ENCODE measurements at regions of chr2 and their contacts with region 1.

Region 1: DNA sequence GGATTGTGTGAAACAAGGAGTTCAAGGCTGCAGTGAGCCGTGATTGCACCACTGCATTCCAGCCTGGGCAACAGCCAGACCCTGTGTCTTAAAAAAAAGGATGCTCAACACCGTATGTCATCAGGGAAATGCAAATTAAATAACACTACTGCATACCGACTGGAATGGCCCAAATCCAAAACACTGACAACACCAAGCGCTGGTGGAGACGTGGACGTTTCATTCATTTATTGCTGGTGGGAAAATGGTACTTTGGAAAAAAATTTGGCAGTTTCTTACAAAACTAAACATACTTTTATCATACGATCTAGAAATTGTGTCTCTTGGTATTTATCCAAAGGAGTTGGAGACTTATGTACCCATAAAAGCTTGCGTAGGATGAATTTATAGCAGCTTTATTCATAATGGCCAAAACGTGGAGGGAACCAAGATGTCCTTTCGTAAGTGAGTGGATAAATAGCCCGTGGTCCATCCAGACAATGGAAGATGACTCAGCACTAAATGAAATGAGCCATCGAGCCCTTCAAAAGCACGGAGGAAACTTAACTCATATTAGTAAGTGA is 24.2 kb downstream of the NEU4 start:
- DNase-seq: peak; percentile 55
- ATAC-seq: peak; percentile 83
- H3K4me3 ChIP-seq: no peak overlapping the region
- H3K27ac ChIP-seq: no peak overlapping the region
- H3K4me1 ChIP-seq: no peaks in the 10 kb centered on the region
- H3K27me3 ChIP-seq: peaks cover 10% of the 10 kb centered on the region
- CTCF ChIP-seq: no peak
- POLR2A ChIP-seq: no peak
- RAD21 ChIP-seq: no peak

Region 2: DNA sequence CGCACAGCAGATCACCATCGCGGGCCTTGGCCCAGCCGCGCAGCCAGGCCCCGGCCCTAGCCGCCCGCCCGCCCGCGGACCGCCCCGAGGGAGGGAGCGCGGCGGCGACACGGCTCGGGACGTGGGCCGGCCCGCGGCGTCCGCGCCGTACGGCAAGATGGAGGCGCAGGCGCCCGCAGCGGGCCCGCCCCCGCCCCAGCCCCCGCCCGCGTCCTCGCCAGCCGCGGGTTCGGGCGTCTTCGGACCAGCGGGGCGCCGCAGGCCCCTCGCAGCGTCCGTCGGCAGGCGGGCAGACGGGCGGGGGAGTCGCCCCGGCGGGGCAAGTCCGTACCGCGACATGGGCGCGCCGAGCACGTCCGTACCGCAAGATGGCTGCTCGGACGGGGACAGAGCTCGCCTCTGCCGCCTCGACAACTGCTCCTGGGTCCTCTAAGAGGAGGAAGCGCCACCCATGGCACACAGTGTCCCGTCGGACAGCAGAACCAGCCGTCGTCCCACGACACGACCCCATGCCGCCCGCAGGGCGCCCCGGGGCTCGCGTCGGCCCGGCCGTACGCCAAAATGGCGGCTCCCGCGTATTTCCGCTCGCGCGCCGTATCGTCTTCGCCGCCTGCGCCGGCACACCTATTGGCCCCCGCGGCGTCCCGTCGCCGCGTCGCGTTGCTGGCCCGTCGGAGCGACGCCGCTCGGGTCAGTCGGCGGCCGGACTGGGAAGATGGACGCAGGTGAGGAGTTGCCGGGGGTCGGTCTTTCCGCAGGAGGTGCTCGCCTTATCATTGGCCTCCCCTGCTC is 196.0 kb before region 1 on chr2 and contains the starts of genes ATG4B and THAP4:
- CTCF ChIA-PET with region 1: no interaction called
- POLR2A ChIA-PET with region 1: no interaction called
- dilution Hi-C with region 1: no loop called
- in situ Hi-C with region 1: no loop called
- intact Hi-C with region 1: no loop called
- DNase-seq: peak; percentile 82
- ATAC-seq: peak; percentile 87
- H3K4me3 ChIP-seq: peak within 1 kb of the TSS; percentile 100
- H3K27ac ChIP-seq: peak within 1 kb of the TSS; percentile 100
- H3K4me1 ChIP-seq: peaks cover 3% of the 10 kb centered on the region; the same call in 1 of the 2 replicates
- H3K27me3 ChIP-seq: no peaks in the 10 kb centered on the region
- CTCF ChIP-seq: no peak
- POLR2A ChIP-seq: peak; percentile 82
- RAD21 ChIP-seq: no peak
- total RNA-seq, gene ATG4B: 102 and 146 TPM in 2 replicates
- total RNA-seq, gene THAP4: 33.9 and 42.2 TPM in 2 replicates

Region 3: GRCh38 chr2:241762933-241763369 is 70.2 kb before region 1 on chr2:
- CTCF ChIA-PET with region 1: no interaction called
- POLR2A ChIA-PET with region 1: no interaction called
- dilution Hi-C with region 1: no loop called
- in situ Hi-C with region 1: no loop called
- intact Hi-C with region 1: no loop called
- DNase-seq: no peak
- ATAC-seq: no peak; the same call in 1 of the 2 replicates
- H3K4me3 ChIP-seq: no peak overlapping the region
- H3K27ac ChIP-seq: no peak overlapping the region
- H3K4me1 ChIP-seq: no peaks in the 10 kb centered on the region
- H3K27me3 ChIP-seq: no peaks in the 10 kb centered on the region
- CTCF ChIP-seq: no peak
- POLR2A ChIP-seq: no peak
- RAD21 ChIP-seq: no peak

Region 4: GRCh38 chr2:241794250-241794823 is 38.8 kb before region 1 on chr2:
- CTCF ChIA-PET with region 1: no interaction called
- POLR2A ChIA-PET with region 1: no interaction called
- dilution Hi-C with region 1: no loop called
- in situ Hi-C with region 1: no loop called
- intact Hi-C with region 1: loop called (anchors 5 kb)
- DNase-seq: no peak
- ATAC-seq: no peak
- H3K4me3 ChIP-seq: no peak overlapping the region
- H3K27ac ChIP-seq: no peak overlapping the region
- H3K4me1 ChIP-seq: no peaks in the 10 kb centered on the region
- H3K27me3 ChIP-seq: peaks cover 12% of the 10 kb centered on the region; the same call in 1 of the 2 replicates
- CTCF ChIP-seq: no peak
- POLR2A ChIP-seq: no peak
- RAD21 ChIP-seq: no peak

Region 5: DNA sequence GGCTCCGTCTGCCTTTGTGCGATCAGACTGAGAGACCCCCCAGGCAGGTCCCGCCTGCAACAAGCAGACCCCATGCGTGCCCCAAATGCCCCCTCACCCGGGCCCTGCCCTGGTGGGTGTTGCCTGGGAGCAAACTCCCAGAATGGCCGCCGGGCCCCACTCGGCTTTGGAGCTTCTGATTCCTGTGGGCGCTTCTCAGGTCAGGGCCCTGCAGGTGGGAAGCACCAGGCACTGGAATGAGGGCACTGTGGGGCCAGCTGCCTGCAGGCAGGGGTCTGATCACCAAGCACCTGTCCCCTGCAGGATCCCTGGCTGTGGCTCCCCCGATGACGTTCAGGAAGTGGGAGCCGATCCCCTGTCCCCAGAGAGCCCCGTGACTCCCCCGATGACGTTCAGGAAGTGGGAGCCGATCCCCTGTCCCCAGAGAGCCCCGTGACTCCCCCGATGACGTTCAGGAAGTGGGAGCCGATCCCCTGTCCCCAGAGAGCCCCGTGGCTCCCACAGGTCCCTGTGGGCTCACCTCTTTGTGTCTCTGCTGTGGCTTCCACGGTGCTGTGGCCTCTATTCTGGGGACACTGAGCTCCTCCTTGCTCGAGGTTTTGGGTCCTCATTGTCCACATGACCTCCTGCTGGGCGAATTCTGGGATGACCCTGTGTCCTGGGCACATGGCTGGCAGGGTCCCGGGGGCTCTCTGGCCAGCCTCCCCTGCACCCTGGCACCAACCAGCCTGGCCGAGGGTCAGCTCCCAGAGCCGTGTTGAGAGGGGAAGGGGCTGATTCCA is 19.5 kb before region 1 on chr2:
- CTCF ChIA-PET with region 1: no interaction called
- POLR2A ChIA-PET with region 1: no interaction called
- dilution Hi-C with region 1: no loop called
- in situ Hi-C with region 1: no loop called
- intact Hi-C with region 1: no loop called
- DNase-seq: no peak
- ATAC-seq: no peak
- H3K4me3 ChIP-seq: no peak overlapping the region
- H3K27ac ChIP-seq: no peak overlapping the region
- H3K4me1 ChIP-seq: no peaks in the 10 kb centered on the region
- H3K27me3 ChIP-seq: peaks cover 18% of the 10 kb centered on the region
- CTCF ChIP-seq: no peak
- POLR2A ChIP-seq: no peak
- RAD21 ChIP-seq: no peak

Region 6: DNA sequence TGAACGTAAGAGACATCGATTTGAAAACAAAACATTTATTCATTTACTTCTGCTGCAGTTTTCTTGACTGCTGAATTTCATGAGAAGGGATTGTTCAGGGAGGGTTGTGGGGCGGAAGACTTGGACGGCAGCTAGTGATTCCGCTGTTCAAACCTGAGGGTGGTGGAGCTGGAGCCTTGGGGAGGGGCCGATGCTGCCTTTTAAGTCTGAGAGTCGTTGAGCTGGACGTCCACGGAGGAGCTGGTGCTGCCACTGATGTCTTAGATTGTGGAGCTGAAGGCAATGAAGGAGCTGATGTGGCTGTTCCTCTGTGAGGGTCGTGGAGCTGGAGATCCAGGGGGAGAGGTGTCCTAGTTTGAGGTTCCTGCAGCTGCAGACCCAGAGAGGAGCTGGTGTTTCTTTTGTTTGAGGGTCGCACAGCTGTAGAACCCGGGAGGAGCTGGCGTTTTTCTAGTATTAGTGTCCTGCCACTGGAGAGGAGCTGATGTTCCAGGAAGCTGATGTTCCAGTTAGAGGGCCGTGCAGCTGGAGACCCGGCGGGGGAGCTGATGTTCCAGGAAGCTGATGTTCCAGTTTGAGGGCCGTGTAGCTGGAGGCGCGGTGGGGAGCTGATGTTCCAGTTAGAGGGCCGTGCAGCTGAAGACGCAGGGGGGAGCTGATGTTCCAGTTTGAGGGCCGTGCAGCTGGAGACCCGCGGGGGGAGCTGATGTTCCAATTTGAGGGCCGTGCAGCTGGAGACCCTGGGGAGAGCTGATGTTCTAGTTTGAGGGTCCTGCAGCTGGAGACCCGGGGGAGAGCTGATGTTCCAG is 187.2 kb after region 1 on chr2:
- CTCF ChIA-PET with region 1: interaction called, 13 read pairs
- POLR2A ChIA-PET with region 1: no interaction called
- dilution Hi-C with region 1: no loop called
- in situ Hi-C with region 1: no loop called
- intact Hi-C with region 1: no loop called
- DNase-seq: no peak
- ATAC-seq: no peak
- H3K4me3 ChIP-seq: no peak overlapping the region
- H3K27ac ChIP-seq: no peak overlapping the region
- H3K4me1 ChIP-seq: no peaks in the 10 kb centered on the region
- H3K27me3 ChIP-seq: peaks cover 68% of the 10 kb centered on the region
- CTCF ChIP-seq: no peak
- POLR2A ChIP-seq: no peak
- RAD21 ChIP-seq: no peak

Measured in IMR-90 (cell line).